MCF 10A (cell line): ENCODE measurements at regions of chrX and their contacts with region 1.

Region 1: GRCh38 chrX:48696301-48697181 is at the start of gene SUV39H1:
- DNase-seq: peak; percentile 84
- H3K4me3 Mint-ChIP-seq: peak within 1 kb of the TSS; percentile 78
- H3K27ac Mint-ChIP-seq: peak within 1 kb of the TSS; percentile 77
- H3K4me1 Mint-ChIP-seq: no peaks in the 10 kb centered on the region
- H3K27me3 Mint-ChIP-seq: no peaks in the 10 kb centered on the region
- CTCF ChIP-seq: no peak
- total RNA-seq, gene SUV39H1: 6.6 and 8.7 TPM in 2 replicates

Region 2: GRCh38 chrX:48737213-48737938 is 40.8 kb after region 1 on chrX:
- CTCF ChIA-PET with region 1: no interaction called
- POLR2A ChIA-PET with region 1: interaction called, 15 read pairs
- intact Hi-C with region 1: no loop called
- DNase-seq: peak; percentile 94
- H3K4me3 Mint-ChIP-seq: peak overlapping the region; percentile 74
- H3K27ac Mint-ChIP-seq: peak overlapping the region; percentile 68
- H3K4me1 Mint-ChIP-seq: peaks cover 6% of the 10 kb centered on the region
- H3K27me3 Mint-ChIP-seq: no peaks in the 10 kb centered on the region
- CTCF ChIP-seq: no peak

Region 3: GRCh38 chrX:49209434-49210251 is 513.1 kb after region 1 on chrX:
- CTCF ChIA-PET with region 1: no interaction called
- POLR2A ChIA-PET with region 1: no interaction called
- intact Hi-C with region 1: no loop called
- DNase-seq: no peak
- H3K4me3 Mint-ChIP-seq: no peak overlapping the region
- H3K27ac Mint-ChIP-seq: no peak overlapping the region
- H3K4me1 Mint-ChIP-seq: no peaks in the 10 kb centered on the region
- H3K27me3 Mint-ChIP-seq: no peaks in the 10 kb centered on the region
- CTCF ChIP-seq: no peak